CD4-positive, alpha-beta memory T cell (primary cell): ENCODE measurements at regions of chr4 and their contacts with region 1.

Region 1: GRCh38 chr4:6709230-6710114 is at the start of gene MRFAP1L1:
- DNase-seq: peak; percentile 96 to 98 (median 97)
- H3K4me3 ChIP-seq: peak within 1 kb of the TSS; percentile 74 to 84
- H3K4me3 Mint-ChIP-seq: peak within 1 kb of the TSS; percentile 97 to 100 (median 99)
- H3K27ac ChIP-seq: peak within 1 kb of the TSS; percentile 95
- H3K27ac Mint-ChIP-seq: peak within 1 kb of the TSS; percentile 99 to 100 (median 99)
- H3K4me1 ChIP-seq: peaks cover 51% of the 10 kb centered on the region
- H3K4me1 Mint-ChIP-seq: peaks cover 44 to 71% (median 55%) of the 10 kb centered on the region in 4 donors
- H3K27me3 ChIP-seq: no peaks in the 10 kb centered on the region
- H3K27me3 Mint-ChIP-seq: no peaks in the 10 kb centered on the region
- total RNA-seq, gene MRFAP1L1: 127 to 134 TPM

Region 2: GRCh38 chr4:6688879-6689505 is 20.5 kb before region 1 on chr4:
- CTCF ChIA-PET with region 1: interaction called, 52 read pairs
- POLR2A ChIA-PET with region 1: interaction called, 1,401 read pairs
- intact Hi-C with region 1: loop called (anchors 1 kb)
- DNase-seq: peak; percentile 60 to 92 (median 64)
- H3K4me3 ChIP-seq: peak overlapping the region; percentile 18 to 55
- H3K4me3 Mint-ChIP-seq: peak overlapping the region; percentile 87 to 97 (median 93)
- H3K27ac ChIP-seq: peak overlapping the region; percentile 62
- H3K27ac Mint-ChIP-seq: peak overlapping the region; percentile 89 to 99 (median 97)
- H3K4me1 ChIP-seq: peaks cover 73% of the 10 kb centered on the region
- H3K4me1 Mint-ChIP-seq: peaks cover 55 to 88% (median 72%) of the 10 kb centered on the region in 4 donors
- H3K27me3 ChIP-seq: no peaks in the 10 kb centered on the region
- H3K27me3 Mint-ChIP-seq: no peaks in the 10 kb centered on the region

Region 3: GRCh38 chr4:6695660-6696630 is 13.5 kb before region 1 on chr4:
- CTCF ChIA-PET with region 1: interaction called, 52 read pairs
- POLR2A ChIA-PET with region 1: interaction called, 663 read pairs
- intact Hi-C with region 1: loop called (anchors 1 kb)
- DNase-seq: peak; percentile 78 to 89 (median 81)
- H3K4me3 ChIP-seq: no peak overlapping the region
- H3K4me3 Mint-ChIP-seq: peak overlapping the region; percentile 33 to 85 (median 71)
- H3K27ac ChIP-seq: peak overlapping the region; percentile 81
- H3K27ac Mint-ChIP-seq: peak overlapping the region; percentile 89 to 96 (median 92)
- H3K4me1 ChIP-seq: peaks cover 98% of the 10 kb centered on the region
- H3K4me1 Mint-ChIP-seq: peaks cover 59 to 92% (median 78%) of the 10 kb centered on the region in 4 donors
- H3K27me3 ChIP-seq: no peaks in the 10 kb centered on the region
- H3K27me3 Mint-ChIP-seq: no peaks in the 10 kb centered on the region

Region 4: GRCh38 chr4:6783053-6783981 is 73.8 kb after region 1 on chr4:
- CTCF ChIA-PET with region 1: no interaction called
- POLR2A ChIA-PET with region 1: interaction called, 14 read pairs
- intact Hi-C with region 1: loop called (anchors 2 kb)
- DNase-seq: peak; percentile 87 to 89 (median 88)
- H3K4me3 ChIP-seq: peak overlapping the region; percentile 38 to 71
- H3K4me3 Mint-ChIP-seq: peak overlapping the region; percentile 84 to 92 (median 88)
- H3K27ac ChIP-seq: peak overlapping the region; percentile 96
- H3K27ac Mint-ChIP-seq: peak overlapping the region; percentile 88 to 93 (median 91)
- H3K4me1 ChIP-seq: peaks cover 44% of the 10 kb centered on the region
- H3K4me1 Mint-ChIP-seq: peaks cover 32 to 61% (median 47%) of the 10 kb centered on the region in 4 donors
- H3K27me3 ChIP-seq: no peaks in the 10 kb centered on the region
- H3K27me3 Mint-ChIP-seq: no peaks in the 10 kb centered on the region